ENCODE measurements at regions of chr11 and their contacts with region 1.

Region 1: GRCh38 chr11:61439615-61440014 is 9.7 kb downstream of the SDHAF2 start:
- DNase-seq: no peak
- H3K4me3 ChIP-seq: no peak overlapping the region
- H3K27ac ChIP-seq: no peak overlapping the region
- H3K4me1 ChIP-seq: peaks cover 3% of the 10 kb centered on the region
- H3K27me3 ChIP-seq: no peaks in the 10 kb centered on the region
- CTCF ChIP-seq: no peak

Region 2: DNA sequence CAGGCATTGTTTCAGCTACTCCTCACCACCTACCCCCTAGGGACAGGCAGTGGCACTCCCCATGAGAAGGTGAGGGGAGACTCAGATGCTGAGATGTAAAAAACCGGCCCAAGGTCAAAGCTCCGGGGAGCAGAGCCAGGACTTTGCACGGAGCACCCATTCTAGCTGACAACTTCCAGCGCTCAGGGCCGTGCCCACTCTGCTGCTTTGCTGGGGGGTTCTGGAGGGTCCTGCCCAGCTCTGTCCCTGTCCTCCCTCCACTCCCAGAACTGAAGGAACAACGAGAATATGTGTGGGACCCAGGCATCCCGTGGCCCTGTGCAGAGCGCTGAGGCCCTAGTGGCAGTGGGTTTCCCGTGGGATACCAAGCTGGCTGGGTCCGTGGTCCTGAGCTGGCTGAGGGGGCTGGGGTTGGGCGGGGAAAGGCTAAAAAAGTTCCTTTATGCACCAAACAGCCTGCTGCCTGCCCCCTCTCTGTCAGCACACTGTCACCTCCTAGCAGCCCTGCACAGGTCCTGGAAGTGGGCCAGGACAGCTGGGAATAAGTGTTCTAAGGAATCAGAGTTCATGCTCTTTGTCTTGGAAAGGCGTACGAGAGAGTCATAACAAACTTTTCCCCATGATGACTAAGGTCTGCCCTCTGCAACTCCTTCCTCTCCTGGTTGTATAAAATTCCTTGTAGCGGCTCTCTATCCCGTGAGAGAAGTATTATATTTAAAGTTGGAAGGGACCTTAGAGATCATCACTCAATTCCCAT is 652.6 kb before region 1 on chr11:
- CTCF ChIA-PET with region 1: interaction called, 12 read pairs
- dilution Hi-C with region 1: no loop called
- in situ Hi-C with region 1: no loop called
- intact Hi-C with region 1: no loop called
- DNase-seq: no peak
- H3K4me3 ChIP-seq: no peak overlapping the region
- H3K27ac ChIP-seq: no peak overlapping the region
- H3K4me1 ChIP-seq: no peaks in the 10 kb centered on the region
- H3K27me3 ChIP-seq: no peaks in the 10 kb centered on the region
- CTCF ChIP-seq: no peak

Measured in mammary epithelial cell (primary cell).